Activated CD4-positive, alpha-beta T cell treated with anti-CD3 and anti-CD28 coated beads for 36 hours (primary cell): ENCODE measurements at regions of chr1 and their contacts with region 1.

Region 1: DNA sequence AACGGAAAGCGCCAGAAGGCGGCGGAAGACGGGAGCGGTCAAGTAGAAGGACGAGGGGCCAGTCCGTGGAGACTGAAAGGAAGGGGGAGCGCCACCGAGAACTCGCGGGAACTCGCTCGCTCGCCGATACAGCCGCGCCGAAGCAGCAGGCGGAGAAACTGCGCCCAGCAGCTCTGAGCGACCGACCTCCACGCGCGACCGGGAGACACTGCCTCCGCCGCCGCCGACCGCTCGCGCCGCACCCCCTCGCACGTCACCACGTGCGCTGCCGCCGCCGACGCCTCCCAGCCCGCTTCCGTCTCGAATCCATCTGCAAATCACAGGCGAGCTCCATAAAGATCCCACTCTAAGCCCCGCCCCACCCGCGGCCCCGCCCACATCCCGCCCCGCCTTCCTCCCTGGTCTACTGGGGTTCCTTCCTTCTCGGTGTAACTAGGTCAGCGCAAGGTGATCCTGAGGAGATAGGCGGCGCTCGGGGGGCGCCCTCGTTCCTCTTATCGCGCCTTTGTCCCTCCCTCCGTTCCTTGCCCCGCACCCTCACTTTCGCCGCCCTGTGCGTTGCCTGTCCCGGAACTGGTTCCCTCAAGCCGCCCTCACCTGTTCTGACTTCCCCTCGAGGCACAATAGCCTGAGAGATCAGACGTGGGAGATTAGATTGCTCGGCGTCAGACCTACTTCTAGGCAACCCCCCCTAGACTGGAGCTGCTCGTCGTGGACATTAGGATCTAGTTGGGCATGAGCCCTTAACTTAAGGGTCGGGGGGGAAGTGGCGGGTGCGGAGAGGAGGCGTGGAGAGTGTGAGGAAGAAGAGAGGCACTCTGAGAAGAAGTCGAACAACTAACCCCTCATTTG is at the start of gene IVNS1ABP:
- DNase-seq: peak; percentile 97
- ATAC-seq: peak; percentile 81
- H3K4me3 Mint-ChIP-seq: peak within 1 kb of the TSS; percentile 84
- H3K27ac Mint-ChIP-seq: peak within 1 kb of the TSS; percentile 99
- H3K4me1 Mint-ChIP-seq: peaks cover 38% of the 10 kb centered on the region
- H3K27me3 Mint-ChIP-seq: no peaks in the 10 kb centered on the region
- total RNA-seq, gene IVNS1ABP: 116 to 129 TPM

Region 2: GRCh38 chr1:184866991-184867788 is 450.1 kb before region 1 on chr1:
- CTCF ChIA-PET with region 1: no interaction called
- POLR2A ChIA-PET with region 1: no interaction called
- intact Hi-C with region 1: loop called in 1 of 2 experiments (anchors 1 kb)
- DNase-seq: peak; percentile 75
- ATAC-seq: peak; percentile 85
- H3K4me3 Mint-ChIP-seq: peak overlapping the region; percentile 32
- H3K27ac Mint-ChIP-seq: peak overlapping the region; percentile 90
- H3K4me1 Mint-ChIP-seq: peaks cover 46% of the 10 kb centered on the region
- H3K27me3 Mint-ChIP-seq: no peaks in the 10 kb centered on the region

Region 3: DNA sequence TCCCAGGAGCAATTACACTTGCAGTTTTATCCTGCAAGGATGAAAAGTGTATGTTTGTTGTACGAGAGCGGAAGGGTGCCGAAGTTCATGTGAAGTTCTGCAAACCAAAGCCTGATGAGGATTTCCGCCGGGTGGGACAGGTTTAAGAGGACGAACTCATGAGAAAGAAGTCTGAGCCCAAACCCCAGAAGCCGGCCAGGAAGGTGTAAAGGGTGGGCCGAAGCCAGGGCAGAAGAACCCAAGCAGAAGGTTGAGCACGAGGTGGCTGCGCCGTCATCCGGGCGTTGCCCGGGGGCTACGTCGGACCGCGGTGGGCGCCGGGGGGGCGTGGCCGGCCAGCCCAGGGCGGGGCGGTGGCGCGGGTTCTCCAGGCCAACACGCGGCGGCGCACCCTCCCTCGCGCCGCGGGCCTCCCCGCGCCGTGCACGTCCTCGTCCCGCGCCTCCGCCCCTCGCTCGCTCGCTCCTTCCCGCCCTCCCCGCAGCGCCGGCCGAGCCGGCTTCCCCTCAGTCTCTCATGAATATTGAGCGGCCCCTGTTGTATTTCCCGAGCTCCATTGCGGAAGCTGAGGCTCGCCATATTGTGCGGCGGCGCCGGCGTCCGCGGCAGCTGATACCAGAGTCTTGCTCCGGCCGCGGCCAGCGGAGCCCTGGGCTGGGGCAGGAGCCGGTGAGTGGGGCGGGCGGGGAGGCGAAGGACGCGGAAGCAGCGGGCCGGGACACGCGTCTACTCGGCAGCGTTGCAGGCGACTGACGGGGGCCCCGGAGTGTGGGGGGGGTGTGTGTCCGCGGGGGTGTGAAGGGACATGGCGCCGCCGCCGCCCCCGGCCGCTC is 272.1 kb before region 1 on chr1 and contains the start of gene RNF2:
- CTCF ChIA-PET with region 1: interaction called, 3 read pairs
- POLR2A ChIA-PET with region 1: no interaction called
- intact Hi-C with region 1: loop called in 1 of 2 experiments (anchors 2 kb)
- DNase-seq: peak; percentile 87
- ATAC-seq: peak; percentile 87
- H3K4me3 Mint-ChIP-seq: peak within 1 kb of the TSS; percentile 94
- H3K27ac Mint-ChIP-seq: peak within 1 kb of the TSS; percentile 86
- H3K4me1 Mint-ChIP-seq: peaks cover 34% of the 10 kb centered on the region
- H3K27me3 Mint-ChIP-seq: no peaks in the 10 kb centered on the region
- total RNA-seq, gene RNF2: 19.6 to 23.6 TPM

Region 4: GRCh38 chr1:185338719-185339622 is 21.7 kb after region 1 on chr1:
- CTCF ChIA-PET with region 1: interaction called, 4 read pairs
- POLR2A ChIA-PET with region 1: interaction called, 3 read pairs
- intact Hi-C with region 1: loop called in 1 of 2 experiments (anchors 2 kb)
- DNase-seq: peak; percentile 59
- ATAC-seq: peak; percentile 86
- H3K4me3 Mint-ChIP-seq: no peak overlapping the region
- H3K27ac Mint-ChIP-seq: peak overlapping the region; percentile 82
- H3K4me1 Mint-ChIP-seq: peaks cover 32% of the 10 kb centered on the region
- H3K27me3 Mint-ChIP-seq: no peaks in the 10 kb centered on the region

Region 5: DNA sequence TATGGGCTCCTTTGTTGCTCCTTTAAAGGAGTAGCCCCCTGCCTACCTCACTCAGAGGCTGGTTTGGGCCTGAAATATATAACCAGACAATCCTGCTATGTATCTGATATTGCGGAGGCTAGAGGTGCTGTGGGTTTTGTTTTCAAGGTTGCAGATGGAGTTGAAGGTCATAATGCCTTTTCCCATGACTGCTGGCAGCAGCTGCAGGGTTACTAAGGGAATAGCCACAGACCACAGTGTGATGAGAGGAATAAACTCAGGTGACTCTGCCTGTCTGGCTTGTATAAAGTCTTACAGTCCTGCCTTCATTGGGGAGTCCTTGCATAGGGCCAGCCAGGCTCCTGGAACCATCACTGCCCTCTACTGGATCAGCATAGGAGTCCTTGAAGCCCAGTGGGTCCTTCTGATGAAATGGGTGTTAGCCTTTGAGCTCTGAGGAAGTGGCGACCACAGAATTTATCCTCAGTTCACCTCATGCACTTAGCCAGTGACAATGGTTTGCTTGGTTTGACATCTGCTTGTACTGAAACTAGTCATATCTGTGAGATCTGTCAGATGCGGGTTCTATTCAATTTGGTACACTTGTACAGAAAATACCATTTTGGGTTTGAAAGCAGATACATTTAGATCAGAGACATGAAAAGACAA is 242.5 kb after region 1 on chr1:
- CTCF ChIA-PET with region 1: interaction called, 4 read pairs
- POLR2A ChIA-PET with region 1: interaction called, 3 read pairs
- intact Hi-C with region 1: loop called (anchors 1 to 2 kb)
- DNase-seq: peak; percentile 68
- ATAC-seq: peak; percentile 90
- H3K4me3 Mint-ChIP-seq: no peak overlapping the region
- H3K27ac Mint-ChIP-seq: peak overlapping the region; percentile 59
- H3K4me1 Mint-ChIP-seq: peaks cover 42% of the 10 kb centered on the region
- H3K27me3 Mint-ChIP-seq: no peaks in the 10 kb centered on the region

Region 6: DNA sequence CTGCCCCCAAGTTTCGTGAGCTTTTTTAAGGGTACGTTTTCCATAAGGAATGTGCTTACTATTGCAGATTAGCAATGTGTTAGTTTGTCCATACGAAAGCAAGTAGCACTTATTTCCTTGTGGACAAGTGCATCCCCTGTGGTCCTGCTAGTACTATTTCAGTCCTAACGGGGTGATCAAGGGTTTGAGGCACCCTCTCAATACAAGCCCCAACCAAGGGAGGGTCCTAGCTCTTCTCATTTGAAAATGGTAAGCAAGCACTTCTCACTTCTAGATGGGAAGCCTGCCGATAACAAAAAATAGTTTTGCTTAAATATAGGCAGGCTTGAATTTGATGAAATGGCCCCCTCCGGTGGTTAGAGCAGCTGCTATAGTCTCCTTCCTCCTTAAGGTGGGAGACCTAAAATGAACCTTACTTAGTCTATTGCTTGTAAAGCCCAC is 352.9 kb after region 1 on chr1:
- CTCF ChIA-PET with region 1: interaction called, 7 read pairs
- POLR2A ChIA-PET with region 1: no interaction called
- intact Hi-C with region 1: loop called (anchors 5 kb)
- DNase-seq: peak; percentile 64
- ATAC-seq: peak; percentile 85
- H3K4me3 Mint-ChIP-seq: no peak overlapping the region
- H3K27ac Mint-ChIP-seq: no peak overlapping the region
- H3K4me1 Mint-ChIP-seq: peaks cover 23% of the 10 kb centered on the region
- H3K27me3 Mint-ChIP-seq: no peaks in the 10 kb centered on the region

Region 7: DNA sequence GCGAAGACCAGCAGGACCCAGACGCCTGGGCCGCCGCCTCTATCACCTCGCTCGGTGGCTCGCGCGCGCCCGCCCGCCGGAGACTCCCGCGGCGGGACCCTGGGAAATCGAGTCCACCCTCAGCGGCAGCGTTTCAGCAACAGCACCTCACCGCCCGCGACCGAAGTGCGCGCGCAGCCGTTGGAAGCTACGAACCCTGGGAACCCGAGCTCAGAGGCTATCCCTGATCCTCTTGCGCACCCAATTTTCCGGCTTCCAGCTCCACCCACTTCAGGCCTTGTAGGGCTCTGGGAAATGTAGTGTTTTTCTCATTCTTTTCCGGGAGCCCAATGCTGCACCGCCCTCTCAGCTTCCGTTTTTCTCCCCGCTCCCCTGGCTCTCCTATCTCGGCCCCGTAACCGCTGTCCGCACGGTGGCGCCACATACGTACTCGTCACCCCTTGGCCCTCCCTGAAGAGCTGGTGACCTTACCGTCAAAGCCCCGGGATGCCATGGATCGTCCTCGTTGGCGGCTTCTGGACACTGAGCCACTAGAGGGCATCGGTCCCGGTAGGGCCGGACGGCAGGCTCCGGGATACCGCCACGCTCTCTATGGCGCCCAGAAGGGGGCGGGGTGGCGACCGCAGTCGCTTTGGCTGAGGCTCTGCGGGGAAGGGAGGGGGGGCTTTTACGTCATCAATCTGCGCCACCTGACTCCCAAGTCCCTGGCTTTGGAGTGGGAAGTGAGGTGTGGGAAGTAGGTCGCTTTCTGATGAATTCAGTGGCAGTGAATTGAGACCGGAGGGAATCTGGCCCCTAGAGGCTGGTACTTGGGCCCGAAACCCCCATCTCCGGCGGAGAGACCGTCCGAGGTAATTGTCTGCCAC is 1058.1 kb after region 1 on chr1 and contains the starts of genes ODR4 and TPR:
- CTCF ChIA-PET with region 1: no interaction called
- POLR2A ChIA-PET with region 1: no interaction called
- intact Hi-C with region 1: loop called (anchors 1 to 5 kb)
- DNase-seq: peak; percentile 97
- ATAC-seq: peak; percentile 90
- H3K4me3 Mint-ChIP-seq: peak within 1 kb of the TSS; percentile 98
- H3K27ac Mint-ChIP-seq: peak within 1 kb of the TSS; percentile 98
- H3K4me1 Mint-ChIP-seq: peaks cover 37% of the 10 kb centered on the region
- H3K27me3 Mint-ChIP-seq: no peaks in the 10 kb centered on the region
- total RNA-seq, gene ODR4: 13.1 to 14.0 TPM
- total RNA-seq, gene TPR: 151 to 152 TPM